A549 (cell line): ENCODE measurements at regions of chr17 and their contacts with region 1.

Region 1: GRCh38 chr17:64661976-64662773 is at the start of gene SMURF2:
- DNase-seq: peak; percentile 78 to 89
- ATAC-seq: peak; percentile 80 to 84
- H3K4me3 ChIP-seq: peak within 1 kb of the TSS; percentile 92
- H3K27ac ChIP-seq: peak within 1 kb of the TSS; percentile 92 to 94
- H3K4me1 ChIP-seq: peaks cover 54% of the 10 kb centered on the region
- CTCF ChIP-seq: no peak
- EP300 ChIP-seq: no peak; a peak in 1 of 5 replicates
- POLR2A ChIP-seq: peak; percentile 87
- RAD21 ChIP-seq: peak; percentile 14 to 27; a peak in 2 of 5 replicates
- polyA plus RNA-seq, gene SMURF2: 26.3 and 29.1 TPM in 2 replicates

Region 2: GRCh38 chr17:64572638-64573154 is 89.5 kb before region 1 on chr17:
- CTCF ChIA-PET with region 1: no interaction called
- POLR2A ChIA-PET with region 1: no interaction called
- DNase-seq: peak in 1 of 2 experiments; percentile 7
- ATAC-seq: peak in 1 of 2 experiments; percentile 49; a peak in 2 of 6 replicates
- H3K4me3 ChIP-seq: no peak overlapping the region
- H3K27ac ChIP-seq: 0 out of 6 replicates have a peak overlapping the region, but pooled peaks of 1 of the 2 experiments have one; percentile 7
- H3K4me1 ChIP-seq: 0 out of 3 replicates have a peak, but pooled peaks cover 4% of the 10 kb centered on the region
- CTCF ChIP-seq: no peak
- EP300 ChIP-seq: no peak
- POLR2A ChIP-seq: no peak
- RAD21 ChIP-seq: no peak

Region 3: DNA sequence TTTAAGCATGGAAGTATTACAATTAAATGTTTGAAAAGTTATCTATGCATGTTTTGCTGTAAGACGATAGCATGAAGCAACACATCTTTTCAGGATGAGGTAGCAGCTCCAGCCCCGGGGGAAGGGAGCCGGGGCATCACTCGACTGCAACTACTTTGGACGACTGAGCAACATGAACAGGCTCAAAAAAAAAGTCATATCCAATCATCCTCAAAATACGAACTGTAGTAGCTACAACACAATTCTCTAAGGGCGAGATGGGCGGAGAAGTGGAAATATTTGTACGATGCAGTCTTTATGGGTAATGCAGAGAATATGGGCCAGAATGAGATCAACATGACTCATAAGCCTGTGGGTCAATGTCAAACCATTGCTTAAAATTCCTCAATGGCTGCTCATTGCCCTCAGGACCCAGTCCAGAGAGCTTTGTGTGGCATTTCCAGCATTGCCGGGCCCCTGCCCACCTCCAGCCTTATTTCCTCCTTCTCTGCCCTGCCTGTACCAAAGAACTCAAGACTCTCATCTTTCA is 17.6 kb after region 1 on chr17:
- CTCF ChIA-PET with region 1: no interaction called
- POLR2A ChIA-PET with region 1: interaction called, 17 read pairs
- DNase-seq: peak; percentile 95
- ATAC-seq: peak; percentile 93 to 99
- H3K4me3 ChIP-seq: peak overlapping the region; percentile 7; the same call in 2 of the 3 replicates
- H3K27ac ChIP-seq: peak overlapping the region; percentile 84 to 86
- H3K4me1 ChIP-seq: peaks cover 56% of the 10 kb centered on the region
- CTCF ChIP-seq: no peak; the same call in 2 of the 3 replicates
- EP300 ChIP-seq: peak; percentile 86 to 91
- POLR2A ChIP-seq: no peak
- RAD21 ChIP-seq: peak; percentile 41 to 59; a peak in 4 of 5 replicates

Region 4: DNA sequence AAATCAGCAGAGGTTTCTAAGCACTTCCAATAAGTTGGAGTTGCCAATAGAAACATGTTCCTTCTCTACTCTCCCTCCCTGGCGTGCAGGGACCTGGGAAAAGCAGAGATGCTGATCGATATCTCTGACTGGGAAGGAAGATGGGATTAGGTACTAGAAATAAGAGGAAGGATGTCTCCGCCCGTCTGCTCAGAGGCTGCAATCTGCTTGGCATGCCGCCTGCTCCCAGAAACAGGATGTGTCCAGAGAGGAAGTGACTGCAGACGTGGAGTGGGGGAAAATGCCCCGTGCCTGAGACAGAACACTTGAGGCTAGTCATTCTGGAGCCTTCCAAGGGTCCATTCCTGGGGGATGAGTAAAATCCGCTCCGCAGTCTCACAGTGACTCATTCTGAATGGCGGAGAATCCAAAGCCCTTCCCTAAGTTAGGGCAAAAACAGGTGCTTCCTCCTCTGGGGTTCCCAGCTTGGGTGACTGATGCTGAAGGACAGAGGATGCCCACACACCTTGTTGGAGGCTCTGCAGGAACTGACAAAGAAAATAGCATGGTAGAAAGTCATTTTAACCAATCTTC is 44.9 kb after region 1 on chr17:
- CTCF ChIA-PET with region 1: no interaction called
- POLR2A ChIA-PET with region 1: interaction called, 10 read pairs
- DNase-seq: peak; percentile 97 to 98
- ATAC-seq: peak; percentile 94 to 96
- H3K4me3 ChIP-seq: no peak overlapping the region
- H3K27ac ChIP-seq: peak overlapping the region; percentile 79 to 86
- H3K4me1 ChIP-seq: peaks cover 49% of the 10 kb centered on the region
- CTCF ChIP-seq: no peak
- EP300 ChIP-seq: peak; percentile 81 to 82; a peak in 3 of 5 replicates
- POLR2A ChIP-seq: no peak
- RAD21 ChIP-seq: peak; percentile 36 to 52; a peak in 4 of 5 replicates